PC-9 (cell line): ENCODE measurements at regions of chr19 and their contacts with region 1.

Region 1: DNA sequence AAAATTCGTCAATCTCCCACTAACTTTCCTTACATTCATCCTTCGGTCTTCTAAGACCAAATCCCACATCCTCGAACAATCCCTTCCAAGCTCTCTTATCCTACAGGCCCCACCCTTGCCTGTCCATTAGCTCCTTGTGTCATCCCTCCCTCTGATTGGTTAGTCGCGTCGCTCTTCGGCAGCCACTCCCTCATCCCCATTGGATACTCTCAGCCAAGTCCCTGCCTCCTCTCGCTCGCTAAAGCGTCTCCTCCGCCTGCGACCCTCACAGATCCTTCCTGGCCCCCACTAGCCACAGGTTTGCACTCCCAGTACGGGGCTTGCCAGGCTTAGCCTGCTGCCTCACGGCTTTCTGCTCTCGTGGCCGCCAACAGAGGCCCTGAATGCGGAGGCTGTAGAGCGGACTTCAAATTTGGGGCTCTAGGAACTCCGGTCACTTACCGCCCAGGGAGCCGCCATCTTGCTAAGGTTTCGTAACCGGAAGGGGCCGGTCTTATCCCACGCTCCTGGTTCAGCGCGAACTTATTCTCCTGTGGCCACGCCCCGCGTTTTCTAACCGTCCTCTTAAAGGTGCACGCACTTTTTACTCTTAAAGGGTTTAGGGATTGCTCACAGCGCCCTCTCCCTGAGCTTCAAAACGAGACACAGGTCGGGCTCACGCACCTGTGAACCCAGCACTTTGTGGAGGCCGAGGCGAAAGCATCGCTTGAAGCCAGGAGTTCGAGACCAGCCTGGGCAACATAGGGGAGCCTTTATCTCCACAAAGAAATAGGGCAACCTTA is at the start of gene DMAC2:
- DNase-seq: peak; percentile 91 to 94
- H3K4me3 ChIP-seq: peak within 1 kb of the TSS; percentile 76
- H3K27ac ChIP-seq: peak within 1 kb of the TSS; percentile 77
- H3K4me1 ChIP-seq: peaks cover 7% of the 10 kb centered on the region; the same call in 1 of the 2 replicates
- H3K27me3 ChIP-seq: peaks cover 7% of the 10 kb centered on the region; the same call in 1 of the 2 replicates
- CTCF ChIP-seq: peak; percentile 61; the same call in 1 of the 2 replicates
- total RNA-seq, gene DMAC2: 38.6 and 42.6 TPM in 2 replicates

Region 2: GRCh38 chr19:40165362-40165937 is 1274.2 kb before region 1 on chr19:
- CTCF ChIA-PET with region 1: no interaction called
- POLR2A ChIA-PET with region 1: interaction called, 17 read pairs
- intact Hi-C with region 1: no loop called
- DNase-seq: peak in 1 of 2 experiments; percentile 40
- H3K4me3 ChIP-seq: no peak overlapping the region
- H3K27ac ChIP-seq: no peak overlapping the region
- H3K4me1 ChIP-seq: no peaks in the 10 kb centered on the region
- H3K27me3 ChIP-seq: no peaks in the 10 kb centered on the region
- CTCF ChIP-seq: peak; percentile 61

Region 3: DNA sequence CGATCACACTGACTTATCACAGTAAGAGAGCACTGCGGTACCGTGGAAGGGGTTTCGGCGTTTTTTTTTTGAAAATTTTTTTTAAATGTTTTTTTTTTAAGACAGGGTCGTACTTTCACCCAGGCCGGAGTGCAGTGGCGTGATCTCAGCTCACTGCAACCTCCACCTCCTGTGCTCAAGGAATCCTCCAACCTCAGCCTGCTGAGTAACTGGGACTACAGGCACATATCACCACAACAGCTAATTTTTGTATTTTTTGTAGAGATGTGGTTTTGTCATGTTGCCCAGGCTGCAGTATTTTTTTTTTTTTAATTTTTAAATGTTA is 819.5 kb before region 1 on chr19:
- CTCF ChIA-PET with region 1: no interaction called
- POLR2A ChIA-PET with region 1: interaction called, 18 read pairs
- intact Hi-C with region 1: no loop called
- DNase-seq: no peak
- H3K4me3 ChIP-seq: no peak overlapping the region
- H3K27ac ChIP-seq: no peak overlapping the region
- H3K4me1 ChIP-seq: peaks cover 14% of the 10 kb centered on the region
- H3K27me3 ChIP-seq: no peaks in the 10 kb centered on the region
- CTCF ChIP-seq: no peak

Region 4: GRCh38 chr19:41218615-41219507 is 220.8 kb before region 1 on chr19 and contains the start of gene AXL:
- CTCF ChIA-PET with region 1: no interaction called
- POLR2A ChIA-PET with region 1: interaction called, 13 read pairs
- intact Hi-C with region 1: no loop called
- DNase-seq: peak in 1 of 2 experiments; percentile 87
- H3K4me3 ChIP-seq: peak within 1 kb of the TSS; percentile 68
- H3K27ac ChIP-seq: no peak within 1 kb of the TSS
- H3K4me1 ChIP-seq: peaks cover 25% of the 10 kb centered on the region
- H3K27me3 ChIP-seq: no peaks in the 10 kb centered on the region
- CTCF ChIP-seq: no peak
- total RNA-seq, gene AXL: 236 and 271 TPM in 2 replicates

Region 5: GRCh38 chr19:41327576-41328156 is 112.0 kb before region 1 on chr19:
- CTCF ChIA-PET with region 1: no interaction called
- POLR2A ChIA-PET with region 1: interaction called, 25 read pairs
- intact Hi-C with region 1: no loop called
- DNase-seq: peak; percentile 65 to 92
- H3K4me3 ChIP-seq: peak overlapping the region; percentile 30; the same call in 1 of the 2 replicates
- H3K27ac ChIP-seq: no peak overlapping the region
- H3K4me1 ChIP-seq: peaks cover 16% of the 10 kb centered on the region
- H3K27me3 ChIP-seq: no peaks in the 10 kb centered on the region
- CTCF ChIP-seq: no peak

Region 6: GRCh38 chr19:41372501-41372900 is 67.1 kb before region 1 on chr19:
- CTCF ChIA-PET with region 1: no interaction called
- POLR2A ChIA-PET with region 1: no interaction called
- intact Hi-C with region 1: no loop called
- DNase-seq: no peak
- H3K4me3 ChIP-seq: no peak overlapping the region
- H3K27ac ChIP-seq: no peak overlapping the region
- H3K4me1 ChIP-seq: peaks cover 7% of the 10 kb centered on the region; the same call in 1 of the 2 replicates
- H3K27me3 ChIP-seq: no peaks in the 10 kb centered on the region
- CTCF ChIP-seq: no peak

Region 7: DNA sequence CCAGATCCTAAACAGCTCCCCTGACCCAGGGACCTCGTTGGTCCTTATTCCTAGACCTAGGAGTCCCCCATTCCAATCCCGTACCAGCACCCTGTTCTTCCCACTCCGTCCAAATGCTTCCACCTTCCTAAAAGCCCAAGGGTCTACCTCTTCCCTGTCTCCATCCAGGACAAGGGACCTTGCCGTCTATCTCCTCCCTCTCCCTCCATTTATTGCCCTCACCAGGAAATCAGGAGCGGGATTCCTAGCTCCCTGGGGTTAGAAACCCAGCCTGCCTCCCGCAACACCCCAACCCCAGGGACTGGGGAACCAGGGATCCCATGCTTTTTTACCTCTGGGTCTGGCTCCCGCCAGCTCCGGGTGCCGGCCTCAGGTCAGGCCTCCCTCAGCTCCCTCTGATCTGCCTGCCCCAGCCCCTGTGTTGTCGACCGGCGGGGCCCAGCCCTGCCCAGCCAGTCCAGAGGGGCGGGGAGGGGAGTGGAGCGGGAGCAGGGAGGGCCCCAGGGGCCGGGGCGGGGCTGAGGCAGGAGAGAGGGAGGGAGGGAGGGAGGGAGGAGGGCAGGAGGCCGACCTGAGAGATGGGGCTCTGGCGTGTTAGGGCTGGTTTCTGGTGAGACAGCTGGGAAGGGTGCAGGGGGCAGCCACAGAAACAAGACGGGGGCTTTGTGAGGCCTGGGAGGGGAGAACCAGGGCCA is 12.5 kb before region 1 on chr19 and contains the start of gene B3GNT8:
- CTCF ChIA-PET with region 1: interaction called, 15 read pairs
- POLR2A ChIA-PET with region 1: interaction called, 22 read pairs
- intact Hi-C with region 1: no loop called
- DNase-seq: peak in 1 of 2 experiments; percentile 49
- H3K4me3 ChIP-seq: no peak within 1 kb of the TSS
- H3K27ac ChIP-seq: no peak within 1 kb of the TSS
- H3K4me1 ChIP-seq: no peaks in the 10 kb centered on the region
- H3K27me3 ChIP-seq: no peaks in the 10 kb centered on the region
- CTCF ChIP-seq: no peak
- total RNA-seq, gene B3GNT8: 0.20 TPM in 1 of 2 replicates, not detected in the other

Region 8: GRCh38 chr19:41804336-41804735 is 364.7 kb after region 1 on chr19:
- CTCF ChIA-PET with region 1: interaction called, 14 read pairs
- POLR2A ChIA-PET with region 1: no interaction called
- intact Hi-C with region 1: no loop called
- DNase-seq: no peak
- H3K4me3 ChIP-seq: no peak overlapping the region
- H3K27ac ChIP-seq: no peak overlapping the region
- H3K4me1 ChIP-seq: peaks cover 27% of the 10 kb centered on the region
- H3K27me3 ChIP-seq: 0 out of 2 replicates have a peak, but pooled peaks cover 3% of the 10 kb centered on the region
- CTCF ChIP-seq: no peak